MCF 10A (cell line): ENCODE measurements at regions of chr15 and their contacts with region 1.

Region 1: GRCh38 chr15:54960266-54960665 is 236.5 kb downstream of the RSL24D1 start:
- DNase-seq: no peak
- H3K4me3 Mint-ChIP-seq: no peak overlapping the region
- H3K27ac Mint-ChIP-seq: no peak overlapping the region
- H3K4me1 Mint-ChIP-seq: no peaks in the 10 kb centered on the region
- H3K27me3 Mint-ChIP-seq: peaks cover 23% of the 10 kb centered on the region
- CTCF ChIP-seq: no peak

Region 2: DNA sequence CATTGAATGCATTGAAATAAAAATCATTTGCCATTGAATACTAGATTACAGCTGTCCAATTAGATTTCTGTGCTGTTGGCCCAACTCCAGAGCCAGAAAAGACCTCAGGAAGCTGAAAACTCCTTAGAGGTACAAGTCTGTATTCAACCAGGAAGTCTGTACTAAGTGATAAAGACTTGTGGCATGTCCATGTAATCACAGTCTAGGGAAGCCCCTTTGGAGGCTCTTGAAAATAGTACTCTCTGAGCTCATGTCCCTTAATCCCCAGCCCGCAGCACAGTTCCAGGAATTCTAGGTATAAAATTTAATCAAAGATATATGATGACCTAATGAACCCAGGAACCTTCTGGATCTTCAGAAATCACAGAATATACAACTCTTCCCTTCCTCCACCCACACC is 43.0 kb before region 1 on chr15:
- CTCF ChIA-PET with region 1: no interaction called
- POLR2A ChIA-PET with region 1: no interaction called
- intact Hi-C with region 1: loop called (anchors 10 kb)
- DNase-seq: no peak
- H3K4me3 Mint-ChIP-seq: no peak overlapping the region
- H3K27ac Mint-ChIP-seq: no peak overlapping the region
- H3K4me1 Mint-ChIP-seq: no peaks in the 10 kb centered on the region
- H3K27me3 Mint-ChIP-seq: peaks cover 3% of the 10 kb centered on the region
- CTCF ChIP-seq: no peak

Region 3: GRCh38 chr15:54979964-54980363 is 19.7 kb after region 1 on chr15:
- CTCF ChIA-PET with region 1: no interaction called
- POLR2A ChIA-PET with region 1: no interaction called
- intact Hi-C with region 1: no loop called
- DNase-seq: no peak
- H3K4me3 Mint-ChIP-seq: no peak overlapping the region
- H3K27ac Mint-ChIP-seq: no peak overlapping the region
- H3K4me1 Mint-ChIP-seq: no peaks in the 10 kb centered on the region
- H3K27me3 Mint-ChIP-seq: peaks cover 62% of the 10 kb centered on the region
- CTCF ChIP-seq: no peak